ENCODE measurements at regions of chr1 and their contacts with region 1.

Region 1: DNA sequence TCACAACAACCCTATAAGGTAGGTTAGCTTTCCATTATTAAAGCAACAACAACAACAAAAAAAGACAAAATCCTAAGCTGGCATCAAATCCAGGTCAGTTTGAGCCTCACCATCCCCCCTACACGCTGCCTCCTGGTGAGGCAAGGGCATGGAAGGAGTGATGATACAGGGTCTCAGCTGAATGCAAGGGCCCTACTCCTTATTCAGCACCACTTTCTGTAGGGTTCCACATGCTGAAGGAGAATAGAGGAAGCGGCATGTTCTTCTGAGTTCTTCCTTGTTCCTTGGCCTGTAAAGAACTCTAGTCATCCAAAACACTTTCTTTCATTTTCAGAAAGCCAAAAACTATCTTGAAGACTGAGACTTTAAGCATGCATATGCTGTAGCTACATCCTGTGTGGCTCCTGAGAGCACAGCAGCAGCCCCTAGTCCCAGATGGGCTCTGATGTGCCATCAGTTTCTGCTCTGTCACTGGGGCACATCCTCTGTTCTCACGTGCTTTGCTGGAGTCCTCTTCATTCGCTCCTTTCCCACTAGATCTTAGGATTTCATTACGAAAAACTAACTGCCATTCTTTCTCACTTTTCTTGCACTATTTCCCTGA is 6.2 kb downstream of the ILDR2 start:
- DNase-seq: no peak
- H3K4me3 ChIP-seq: no peak overlapping the region
- H3K4me3 Mint-ChIP-seq: no peak overlapping the region
- H3K27ac Mint-ChIP-seq: no peak overlapping the region
- H3K4me1 ChIP-seq: 0 out of 2 replicates have a peak, but pooled peaks cover 4% of the 10 kb centered on the region
- H3K4me1 Mint-ChIP-seq: no peaks in the 10 kb centered on the region
- H3K27me3 ChIP-seq: peaks cover 1% of the 10 kb centered on the region
- H3K27me3 Mint-ChIP-seq: peaks cover 31% of the 10 kb centered on the region
- CTCF ChIP-seq: no peak

Region 2: DNA sequence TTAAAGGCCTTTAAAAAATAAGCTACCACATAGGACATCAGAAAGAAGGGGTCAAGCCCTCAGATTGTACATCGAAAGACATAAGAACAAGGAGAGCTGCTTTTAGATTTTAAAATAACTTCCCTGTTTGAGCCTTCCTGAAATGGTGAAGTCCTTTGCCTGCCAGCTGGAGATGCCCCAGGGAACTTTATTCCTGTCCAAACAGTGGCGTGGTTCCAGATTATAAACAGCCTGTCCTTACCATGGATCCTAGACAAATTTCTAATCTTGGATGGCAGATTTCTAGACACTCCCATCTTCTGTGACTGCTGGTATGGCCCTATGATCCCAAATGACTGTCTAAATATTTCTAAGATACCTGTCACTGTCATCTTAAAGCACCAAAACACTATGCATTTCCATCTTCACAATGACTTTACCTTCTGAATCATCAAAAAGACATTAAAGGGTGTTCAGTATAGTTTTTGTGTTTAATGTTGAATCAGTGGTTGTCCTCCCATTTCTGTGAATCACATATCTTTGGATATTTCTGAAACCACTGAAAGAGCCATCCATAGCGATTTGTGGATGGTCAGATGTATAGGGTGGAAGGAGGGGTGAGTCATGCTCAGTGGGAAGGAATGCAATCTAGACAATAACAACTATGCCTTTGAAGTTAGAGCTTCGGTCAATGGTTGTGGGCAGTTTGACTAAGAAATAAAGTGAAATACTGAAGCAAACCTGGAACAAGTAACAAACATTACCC is 17.0 kb before region 1 on chr1:
- CTCF ChIA-PET with region 1: no interaction called
- POLR2A ChIA-PET with region 1: no interaction called
- intact Hi-C with region 1: loop called (anchors 2 kb)
- DNase-seq: peak in 1 of 2 experiments; percentile 27
- H3K4me3 ChIP-seq: no peak overlapping the region
- H3K4me3 Mint-ChIP-seq: no peak overlapping the region
- H3K27ac Mint-ChIP-seq: peak overlapping the region; percentile 59
- H3K4me1 ChIP-seq: peaks cover 10% of the 10 kb centered on the region
- H3K4me1 Mint-ChIP-seq: peaks cover 11% of the 10 kb centered on the region
- H3K27me3 ChIP-seq: no peaks in the 10 kb centered on the region
- H3K27me3 Mint-ChIP-seq: peaks cover 3% of the 10 kb centered on the region
- CTCF ChIP-seq: no peak

Region 3: DNA sequence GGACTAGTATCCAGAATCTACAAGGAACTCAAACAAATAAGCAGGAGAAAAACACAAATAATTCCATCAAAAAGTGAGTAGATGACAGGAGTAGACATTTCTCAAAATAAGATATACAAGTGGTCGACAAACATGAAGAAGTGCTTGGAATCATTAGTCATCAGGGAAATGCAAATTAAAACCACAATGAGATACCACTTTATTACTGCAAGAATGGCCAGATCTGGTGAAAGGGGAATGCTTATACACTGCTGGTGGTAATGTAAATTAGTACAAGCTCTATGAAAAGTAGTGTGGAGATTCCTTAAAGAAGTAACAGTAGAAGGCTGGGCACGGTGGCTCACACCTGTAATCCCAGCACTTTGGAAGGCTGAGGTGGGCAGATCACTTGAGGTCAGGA is 325.4 kb after region 1 on chr1:
- CTCF ChIA-PET with region 1: no interaction called
- POLR2A ChIA-PET with region 1: no interaction called
- intact Hi-C with region 1: no loop called
- DNase-seq: no peak
- H3K4me3 ChIP-seq: no peak overlapping the region
- H3K4me3 Mint-ChIP-seq: no peak overlapping the region
- H3K27ac Mint-ChIP-seq: no peak overlapping the region
- H3K4me1 ChIP-seq: peaks cover 15% of the 10 kb centered on the region
- H3K4me1 Mint-ChIP-seq: peaks cover 7% of the 10 kb centered on the region
- H3K27me3 ChIP-seq: no peaks in the 10 kb centered on the region
- H3K27me3 Mint-ChIP-seq: no peaks in the 10 kb centered on the region
- CTCF ChIP-seq: no peak

Measured in Caco-2 (cell line).